AG04450 (cell line): ENCODE measurements at regions of chr15 and their contacts with region 1.

Region 1: DNA sequence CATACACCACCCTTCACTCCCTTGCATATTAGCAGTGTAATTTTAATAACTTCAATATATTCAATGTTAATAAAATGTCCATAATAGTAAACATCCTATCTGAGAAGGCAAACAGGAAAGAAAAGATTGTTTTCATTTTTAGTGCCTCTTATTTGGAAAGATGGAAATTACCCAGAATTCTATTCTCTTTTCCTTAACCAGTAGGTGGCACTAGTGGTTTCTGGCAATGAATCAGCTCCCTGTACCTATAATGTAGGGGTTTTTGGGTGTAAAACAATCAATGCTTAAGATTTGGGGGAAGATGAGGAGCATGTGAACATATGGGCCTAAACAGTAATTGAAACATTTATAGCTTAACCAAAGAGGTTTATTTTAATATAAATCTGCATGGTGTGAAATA is 5.7 kb upstream of the SEMA6D start:
- DNase-seq: no peak
- H3K4me3 ChIP-seq: no peak overlapping the region
- H3K27ac ChIP-seq: no peak overlapping the region
- H3K27me3 ChIP-seq: no peaks in the 10 kb centered on the region
- CTCF ChIP-seq: peak; percentile 64

Region 2: DNA sequence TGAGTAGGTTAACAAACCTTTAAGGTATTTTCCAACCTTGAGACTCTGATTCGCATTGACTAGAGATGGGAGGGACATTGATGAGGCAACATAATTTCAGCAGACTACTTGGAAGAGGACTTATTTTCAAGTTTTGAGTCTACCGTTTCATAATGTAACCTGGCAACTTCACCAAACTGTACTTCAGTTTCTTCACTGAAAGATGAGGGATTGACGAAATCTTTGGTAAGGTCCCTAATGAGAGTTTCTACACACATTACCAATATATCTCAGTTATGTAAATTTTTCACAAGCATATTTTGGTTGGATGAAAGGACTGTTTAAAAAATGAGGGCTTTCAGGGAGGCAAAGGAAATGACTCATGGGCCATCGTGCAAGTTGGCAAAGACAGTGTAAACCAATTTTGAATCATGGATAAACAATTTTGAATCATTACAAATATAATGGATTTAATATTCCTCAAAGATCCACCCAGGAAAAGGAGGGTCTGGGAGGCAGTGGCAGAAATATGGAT is 23.0 kb before region 1 on chr15:
- CTCF ChIA-PET with region 1: interaction called, 20 read pairs
- POLR2A ChIA-PET with region 1: no interaction called
- DNase-seq: peak; percentile 21
- H3K4me3 ChIP-seq: no peak overlapping the region
- H3K27ac ChIP-seq: no peak overlapping the region
- H3K27me3 ChIP-seq: no peaks in the 10 kb centered on the region
- CTCF ChIP-seq: no peak